ENCODE measurements at regions of chr5 and their contacts with region 1.

Region 1: DNA sequence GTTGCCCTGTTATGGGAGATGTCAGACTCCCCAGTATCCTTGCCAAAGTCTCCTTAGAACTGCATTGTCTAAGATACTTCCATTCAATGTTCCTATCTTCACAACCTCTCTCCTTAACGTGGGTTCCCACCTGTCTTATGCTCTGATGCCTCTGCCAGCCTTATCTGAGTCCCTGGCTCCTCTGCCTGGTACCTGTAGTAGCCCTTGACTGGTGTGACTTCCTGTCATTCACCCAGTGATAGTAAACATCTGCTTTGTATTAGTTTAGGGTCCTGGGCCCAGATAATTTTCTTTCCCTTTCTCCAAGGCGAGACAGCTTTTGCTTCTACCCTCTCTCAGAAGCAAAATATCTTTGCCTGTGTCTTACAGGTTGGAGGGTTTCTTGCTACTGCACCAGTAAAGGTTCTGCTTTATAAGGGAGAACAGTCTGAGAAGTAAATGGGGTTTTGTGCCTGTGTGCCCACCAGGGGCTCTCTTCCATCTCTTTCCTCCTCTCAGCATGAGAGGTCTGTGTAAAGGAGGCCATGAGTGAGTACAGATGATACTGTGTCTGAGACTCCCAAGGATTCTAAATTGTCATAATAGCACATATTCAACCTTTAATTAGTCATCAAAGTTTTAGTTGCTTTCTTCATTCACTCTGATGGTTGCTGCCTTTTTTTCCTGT is 220.8 kb downstream of the PRR16 start:
- DNase-seq: no peak
- ATAC-seq: no peak
- H3K4me3 ChIP-seq: no peak overlapping the region
- H3K27ac ChIP-seq: no peak overlapping the region
- H3K4me1 ChIP-seq: peaks cover 33% of the 10 kb centered on the region
- H3K27me3 ChIP-seq: no peaks in the 10 kb centered on the region
- CTCF ChIP-seq: peak; percentile 25; the same call in 1 of the 2 replicates

Region 2: GRCh38 chr5:120538644-120539043 is 146.2 kb before region 1 on chr5:
- CTCF ChIA-PET with region 1: no interaction called
- POLR2A ChIA-PET with region 1: no interaction called
- intact Hi-C with region 1: loop called (anchors 5 kb)
- DNase-seq: peak; percentile 11
- ATAC-seq: peak; percentile 60; the same call in 1 of the 2 replicates
- H3K4me3 ChIP-seq: peak overlapping the region; percentile 46
- H3K27ac ChIP-seq: peak overlapping the region; percentile 79
- H3K4me1 ChIP-seq: peaks cover 12% of the 10 kb centered on the region
- H3K27me3 ChIP-seq: no peaks in the 10 kb centered on the region
- CTCF ChIP-seq: no peak

Region 3: GRCh38 chr5:120604888-120605287 is 80.0 kb before region 1 on chr5:
- CTCF ChIA-PET with region 1: no interaction called
- POLR2A ChIA-PET with region 1: no interaction called
- intact Hi-C with region 1: loop called (anchors 5 kb)
- DNase-seq: peak; percentile 92
- ATAC-seq: peak; percentile 96
- H3K4me3 ChIP-seq: peak overlapping the region; percentile 11; the same call in 1 of the 2 replicates
- H3K27ac ChIP-seq: peak overlapping the region; percentile 61
- H3K4me1 ChIP-seq: peaks cover 41% of the 10 kb centered on the region
- H3K27me3 ChIP-seq: no peaks in the 10 kb centered on the region
- CTCF ChIP-seq: no peak